ENCODE measurements at regions of chr7 and their contacts with region 1.

Region 1: DNA sequence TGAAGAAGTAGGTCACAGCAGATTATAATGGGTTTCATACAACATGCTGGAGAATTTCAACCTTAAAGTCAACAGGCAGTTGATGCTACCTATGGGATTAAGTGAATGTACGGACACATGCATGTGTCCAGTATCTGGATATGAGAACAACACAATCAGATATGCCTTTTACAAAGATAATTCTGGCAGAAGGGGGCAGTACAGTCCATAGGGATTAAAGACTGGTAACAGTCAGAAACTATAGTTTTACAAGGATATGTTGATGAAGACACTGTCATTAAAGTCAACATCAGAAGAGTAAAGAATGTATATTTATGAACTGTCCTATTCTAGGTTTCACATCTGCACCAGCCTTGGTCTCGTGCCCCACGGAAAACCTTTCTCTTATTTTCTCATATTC is 41.5 kb downstream of the ANKMY2 start:
- DNase-seq: no peak
- H3K4me3 Mint-ChIP-seq: no peak overlapping the region
- H3K27ac Mint-ChIP-seq: no peak overlapping the region
- H3K4me1 Mint-ChIP-seq: no peaks in the 10 kb centered on the region
- H3K27me3 Mint-ChIP-seq: no peaks in the 10 kb centered on the region

Region 2: DNA sequence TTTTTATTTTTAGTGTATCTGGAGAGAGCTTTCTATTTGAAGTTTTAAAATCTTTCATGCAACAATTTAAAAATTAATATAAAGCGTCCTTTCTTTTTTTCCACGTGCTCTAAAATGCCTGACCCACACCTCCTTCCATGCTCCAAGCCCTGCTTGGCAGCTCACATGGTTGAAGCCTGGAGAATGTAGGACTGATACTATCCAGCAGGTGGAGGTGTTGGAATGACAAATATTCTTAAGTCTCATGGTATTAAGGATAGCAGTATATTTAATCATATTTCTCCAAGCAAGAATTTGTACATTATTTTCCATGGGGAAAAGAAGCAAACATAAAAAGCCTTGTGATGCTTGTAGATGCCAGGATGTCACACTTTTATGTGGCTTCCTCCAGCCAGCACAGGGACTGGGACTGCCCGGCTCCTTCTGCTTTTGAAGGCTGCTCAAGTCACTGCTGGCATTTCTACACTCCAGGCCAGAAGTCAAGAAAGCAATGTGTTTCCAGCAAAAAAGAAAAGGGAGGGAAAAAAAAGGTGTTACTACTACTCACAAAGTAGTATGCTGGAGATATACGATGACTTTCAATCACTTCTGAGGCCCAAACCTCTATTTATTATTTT is 91.7 kb after region 1 on chr7:
- CTCF ChIA-PET with region 1: no interaction called
- intact Hi-C with region 1: loop called (anchors 5 kb)
- DNase-seq: peak; percentile 11
- H3K4me3 Mint-ChIP-seq: no peak overlapping the region
- H3K27ac Mint-ChIP-seq: no peak overlapping the region
- H3K4me1 Mint-ChIP-seq: peaks cover 10% of the 10 kb centered on the region
- H3K27me3 Mint-ChIP-seq: no peaks in the 10 kb centered on the region

Region 3: GRCh38 chr7:16801111-16801542 is 197.1 kb after region 1 on chr7:
- CTCF ChIA-PET with region 1: interaction called, 6 read pairs
- intact Hi-C with region 1: loop called (anchors 2 kb)
- DNase-seq: no peak
- H3K4me3 Mint-ChIP-seq: no peak overlapping the region
- H3K27ac Mint-ChIP-seq: no peak overlapping the region
- H3K4me1 Mint-ChIP-seq: no peaks in the 10 kb centered on the region
- H3K27me3 Mint-ChIP-seq: peaks cover 5% of the 10 kb centered on the region

Measured in activated naive CD4-positive, alpha-beta T cell treated with anti-CD3 and anti-CD28 coated beads for 36 hours (primary cell).